GM18951 (cell line): ENCODE measurements at regions of chr7 and their contacts with region 1.

Region 1: DNA sequence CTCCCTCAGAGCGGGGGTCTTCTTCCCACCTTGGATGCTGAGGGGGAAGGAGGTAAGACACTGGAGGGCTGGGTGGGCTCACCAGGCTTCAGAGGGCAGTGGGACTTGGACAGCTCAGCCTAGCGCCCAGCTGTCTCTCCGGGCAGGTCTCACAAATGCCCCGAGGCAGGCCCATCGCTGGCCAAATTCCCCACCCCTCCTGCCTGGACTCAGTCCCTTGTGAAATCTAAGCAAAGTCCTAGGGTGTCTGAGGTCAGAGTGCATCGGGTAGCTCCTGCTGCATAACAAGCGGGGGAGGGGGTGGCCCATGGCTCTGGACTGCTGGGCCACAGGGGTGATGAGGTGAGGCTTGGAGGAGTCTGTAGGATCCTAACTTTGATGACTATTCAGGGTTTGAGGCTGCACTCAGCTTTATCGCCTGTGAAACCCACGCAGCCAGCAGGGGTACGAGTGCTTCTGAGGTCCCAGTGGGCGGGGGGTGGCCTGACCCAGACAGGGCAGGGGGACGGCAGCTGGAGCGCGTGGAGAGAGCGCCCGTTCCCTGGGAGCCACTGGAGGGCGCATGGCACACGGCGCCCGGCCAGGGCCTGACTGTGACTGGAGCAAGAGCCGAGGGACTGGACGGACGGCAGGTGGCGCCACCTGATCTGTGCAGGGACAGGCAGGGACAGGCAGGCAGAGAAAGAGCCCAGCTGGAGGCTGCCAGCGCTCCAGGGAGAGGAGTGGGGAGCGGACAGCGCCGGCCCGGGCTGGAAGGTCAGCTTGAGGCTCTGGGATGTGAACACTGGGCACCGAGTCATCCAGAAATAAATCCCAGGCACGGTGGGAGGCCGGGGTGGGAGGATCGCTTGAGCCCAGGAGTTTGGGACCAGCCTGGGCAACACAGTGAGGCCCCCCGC is 10.0 kb downstream of the CYP2W1 start:
- POLR2A ChIP-seq: peak; percentile 36

Region 2: GRCh38 chr7:641269-641671 is 351.7 kb before region 1 on chr7:
- in situ Hi-C with region 1: no loop called
- POLR2A ChIP-seq: no peak

Region 3: GRCh38 chr7:867672-868486 is 125.1 kb before region 1 on chr7:
- in situ Hi-C with region 1: no loop called
- POLR2A ChIP-seq: no peak

Region 4: DNA sequence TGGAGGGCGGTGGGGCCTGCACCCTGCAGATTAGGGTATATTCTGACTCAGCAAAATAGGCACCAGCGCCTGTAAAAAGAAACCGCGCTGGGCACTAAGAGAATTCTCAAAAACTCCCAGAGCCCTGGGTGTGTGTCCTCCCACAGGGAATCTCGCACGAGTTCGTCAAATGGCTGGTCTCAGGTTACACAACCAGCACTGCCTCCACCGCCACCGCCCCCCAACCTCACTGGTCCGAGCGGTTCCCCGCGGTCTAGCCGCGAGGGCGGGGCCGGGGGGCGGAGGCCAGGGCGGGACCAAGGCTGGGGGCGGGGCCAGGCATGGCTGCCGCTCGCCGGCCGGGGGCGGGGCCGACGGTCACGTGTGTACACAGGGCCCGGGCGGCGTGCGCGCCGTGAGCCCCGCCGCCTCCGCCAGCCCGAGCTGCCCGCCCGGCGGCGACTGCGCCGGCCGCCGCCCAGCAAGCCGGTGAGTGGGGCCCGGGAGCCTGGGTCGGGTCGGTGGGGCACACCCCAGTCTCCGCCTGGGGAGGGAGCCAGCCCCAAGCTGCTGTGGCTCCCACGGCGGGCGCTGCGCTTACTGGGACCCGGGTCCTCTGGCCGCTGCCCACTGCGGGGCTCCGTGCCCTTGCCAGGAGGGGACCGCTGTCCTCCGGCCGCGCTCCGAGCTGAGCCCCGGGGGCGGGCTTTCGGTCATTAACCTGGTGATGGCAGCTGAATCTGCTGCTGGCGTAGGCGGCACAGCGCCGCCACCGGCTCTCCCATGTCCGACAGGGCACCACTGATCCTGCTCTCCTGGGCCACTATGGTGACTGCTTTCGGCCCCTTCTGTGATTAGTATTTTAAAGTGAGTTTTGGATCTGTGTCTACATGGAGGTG is 51.5 kb after region 1 on chr7 and contains the start of gene GPR146:
- in situ Hi-C with region 1: loop called (anchors 10 kb)
- POLR2A ChIP-seq: peak; percentile 66

Region 5: DNA sequence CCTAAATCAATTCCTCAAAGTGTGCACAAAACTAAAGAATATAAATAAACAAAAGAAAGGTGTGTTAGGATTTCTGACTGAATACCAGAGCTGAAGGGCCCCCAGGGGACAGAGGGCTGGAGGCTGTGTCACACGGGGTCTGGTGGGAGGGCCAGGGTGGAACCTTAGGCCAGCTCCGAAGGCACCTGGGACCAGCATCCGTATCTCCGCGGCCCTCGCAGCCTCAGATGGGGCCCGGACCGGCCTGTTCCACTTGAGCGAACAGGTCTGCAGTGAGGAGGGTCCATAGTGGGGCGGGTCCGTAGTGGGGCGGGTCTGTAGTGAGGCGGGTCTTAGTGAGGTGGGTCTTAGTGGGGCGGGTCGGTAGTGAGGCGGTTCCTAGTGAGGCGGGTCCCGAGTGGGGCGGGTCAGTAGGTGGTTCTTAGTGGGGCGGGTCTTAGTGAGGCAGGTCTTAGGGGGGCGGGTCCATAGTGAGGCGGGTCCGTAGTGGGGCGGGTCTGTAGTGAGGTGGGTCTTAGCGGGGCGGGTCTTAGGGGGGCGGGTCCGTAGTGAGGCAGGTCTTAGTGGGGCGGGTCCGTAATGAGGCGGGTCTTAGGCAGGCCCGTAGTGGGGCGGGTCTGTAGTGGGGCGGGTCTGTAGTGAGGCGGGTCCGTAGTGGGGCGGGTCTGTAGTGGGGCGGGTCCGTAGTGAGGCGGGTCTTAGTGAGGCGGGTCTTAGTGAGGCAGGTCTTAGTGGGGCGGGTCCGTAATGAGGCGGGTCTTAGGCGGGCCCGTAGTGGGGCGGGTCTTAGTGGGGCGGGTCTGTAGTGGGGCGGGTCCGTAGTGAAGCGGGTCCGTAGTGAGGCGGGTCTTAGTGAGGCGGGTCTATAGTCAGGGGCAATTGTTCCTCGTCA is 66.5 kb after region 1 on chr7:
- in situ Hi-C with region 1: loop called (anchors 5 kb)
- POLR2A ChIP-seq: no peak

Region 6: GRCh38 chr7:1159891-1160668 is 167.1 kb after region 1 on chr7 and contains the start of gene ZFAND2A:
- in situ Hi-C with region 1: loop called (anchors 10 kb)
- POLR2A ChIP-seq: peak; percentile 94

Region 7: GRCh38 chr7:1593091-1593866 is 600.3 kb after region 1 on chr7:
- in situ Hi-C with region 1: no loop called
- POLR2A ChIP-seq: no peak